SK-N-SH (cell line): ENCODE measurements at regions of chr11 and their contacts with region 1.

Region 1: DNA sequence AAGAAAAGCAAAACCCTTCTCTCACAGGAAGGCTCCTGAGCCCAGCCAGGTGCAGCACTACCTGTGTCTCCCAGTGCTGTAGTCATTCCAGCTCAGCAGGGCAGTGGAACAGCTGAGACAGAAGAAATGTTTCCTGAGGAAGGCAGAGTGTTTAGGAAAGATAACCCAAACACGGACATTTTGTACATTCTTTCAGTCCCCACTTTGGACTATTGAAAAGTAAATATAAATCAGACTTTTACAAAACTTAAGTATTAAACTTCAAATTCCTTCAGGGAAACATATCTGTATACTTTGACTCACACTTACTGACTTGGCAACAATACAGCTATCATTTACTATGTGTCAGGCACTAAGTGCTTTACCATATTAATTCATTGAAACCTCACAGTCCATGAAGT is 40.4 kb downstream of the RRAS2 start:
- DNase-seq: no peak
- H3K4me3 ChIP-seq: no peak overlapping the region
- H3K27ac ChIP-seq: no peak overlapping the region
- H3K4me1 ChIP-seq: peaks cover 0 to 15% of the 10 kb centered on the region in 2 experiments; a peak in 2 of 4 replicates
- H3K27me3 ChIP-seq: no peaks in the 10 kb centered on the region
- CTCF ChIP-seq: no peak
- EP300 ChIP-seq: no peak
- RAD21 ChIP-seq: no peak

Region 2: DNA sequence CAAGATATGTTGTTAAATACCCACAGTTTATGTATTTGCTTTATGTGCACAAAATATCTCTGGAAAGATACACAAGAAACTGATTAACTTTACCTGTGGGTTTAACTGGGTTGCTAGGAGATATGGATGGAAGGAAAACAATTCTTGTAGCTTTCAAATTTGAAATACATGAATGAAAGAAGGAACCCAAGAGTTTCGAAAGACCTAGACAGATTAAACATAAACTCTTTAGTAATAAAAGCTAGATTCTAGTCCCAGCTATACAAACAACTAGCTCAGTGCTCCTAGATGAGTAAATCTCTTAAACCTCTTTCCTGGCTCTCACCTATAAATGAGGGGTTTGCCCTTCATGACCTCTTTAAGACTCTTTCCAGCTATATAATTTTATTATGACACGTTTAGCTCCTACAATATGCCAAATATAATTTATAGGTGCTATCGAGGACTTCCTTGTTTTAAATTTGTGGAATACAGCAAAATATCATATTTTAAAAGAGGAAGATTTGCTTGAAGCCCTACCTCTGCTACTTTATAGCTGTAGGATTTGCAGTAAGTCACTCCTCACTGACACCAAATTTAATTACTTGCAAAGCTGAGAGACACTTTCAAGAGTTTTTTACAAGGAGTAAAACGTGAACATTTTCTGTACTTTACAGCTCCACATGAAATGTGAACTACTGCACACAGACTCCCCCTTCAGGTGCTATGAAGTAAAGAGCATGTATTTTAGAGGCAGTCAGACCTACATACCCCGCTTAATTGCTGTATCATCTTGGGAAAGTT is 10.3 kb before region 1 on chr11:
- CTCF ChIA-PET with region 1: interaction called, 11 read pairs
- POLR2A ChIA-PET with region 1: no interaction called
- DNase-seq: peak; percentile 32
- H3K4me3 ChIP-seq: no peak overlapping the region; a peak in 1 of 4 replicates
- H3K27ac ChIP-seq: no peak overlapping the region
- H3K4me1 ChIP-seq: peaks cover 0 to 19% of the 10 kb centered on the region in 2 experiments; a peak in 1 of 4 replicates
- H3K27me3 ChIP-seq: no peaks in the 10 kb centered on the region
- CTCF ChIP-seq: peak; percentile 71
- EP300 ChIP-seq: no peak
- RAD21 ChIP-seq: peak; percentile 52

Region 3: GRCh38 chr11:14336507-14337503 is 18.2 kb after region 1 on chr11:
- CTCF ChIA-PET with region 1: no interaction called
- POLR2A ChIA-PET with region 1: no interaction called
- DNase-seq: no peak
- H3K4me3 ChIP-seq: no peak overlapping the region
- H3K27ac ChIP-seq: peak overlapping the region in 1 of 2 experiments; percentile 67; a peak in 2 of 4 replicates
- H3K4me1 ChIP-seq: no peaks in the 10 kb centered on the region; a peak in 1 of 4 replicates
- H3K27me3 ChIP-seq: no peaks in the 10 kb centered on the region
- CTCF ChIP-seq: no peak
- EP300 ChIP-seq: no peak; a peak in 1 of 4 replicates
- RAD21 ChIP-seq: no peak